A549 (cell line): ENCODE measurements at regions of chr9 and their contacts with region 1.

Region 1: DNA sequence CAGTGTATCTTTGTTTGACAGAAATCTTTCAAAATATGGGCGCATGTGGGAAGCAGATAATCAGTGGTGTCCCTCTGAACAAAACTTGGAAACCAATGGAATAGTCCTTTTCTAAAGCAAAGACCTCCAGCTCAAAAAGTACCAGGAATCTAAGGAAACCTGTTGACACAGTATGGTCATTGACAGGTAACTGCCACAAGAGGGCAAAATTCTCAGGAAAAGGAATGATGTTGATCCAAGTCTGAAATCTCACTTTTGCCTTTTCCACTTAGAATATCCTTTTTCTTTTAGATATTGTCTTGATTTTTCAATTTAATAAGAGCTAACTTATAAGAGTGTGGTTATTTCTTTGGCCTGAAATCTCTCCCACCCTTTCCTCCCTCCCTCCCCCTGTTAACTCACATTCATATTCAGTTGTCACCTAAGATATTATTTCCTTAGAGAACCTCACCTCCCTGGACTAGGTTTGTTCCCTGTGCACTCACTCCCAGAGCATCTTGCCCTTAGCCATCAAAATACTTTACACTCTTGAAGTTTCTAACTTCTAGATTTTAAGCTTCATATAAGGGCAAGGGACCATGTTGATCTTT is 59.0 kb upstream of the BARX1 start:
- DNase-seq: peak; percentile 31 to 39
- ATAC-seq: peak; percentile 64 to 82; a peak in 3 of 6 replicates
- H3K4me3 ChIP-seq: no peak overlapping the region
- H3K27ac ChIP-seq: no peak overlapping the region
- H3K4me1 ChIP-seq: no peaks in the 10 kb centered on the region
- CTCF ChIP-seq: peak; percentile 66
- EP300 ChIP-seq: no peak
- POLR2A ChIP-seq: no peak
- RAD21 ChIP-seq: peak; percentile 57 to 60

Region 2: DNA sequence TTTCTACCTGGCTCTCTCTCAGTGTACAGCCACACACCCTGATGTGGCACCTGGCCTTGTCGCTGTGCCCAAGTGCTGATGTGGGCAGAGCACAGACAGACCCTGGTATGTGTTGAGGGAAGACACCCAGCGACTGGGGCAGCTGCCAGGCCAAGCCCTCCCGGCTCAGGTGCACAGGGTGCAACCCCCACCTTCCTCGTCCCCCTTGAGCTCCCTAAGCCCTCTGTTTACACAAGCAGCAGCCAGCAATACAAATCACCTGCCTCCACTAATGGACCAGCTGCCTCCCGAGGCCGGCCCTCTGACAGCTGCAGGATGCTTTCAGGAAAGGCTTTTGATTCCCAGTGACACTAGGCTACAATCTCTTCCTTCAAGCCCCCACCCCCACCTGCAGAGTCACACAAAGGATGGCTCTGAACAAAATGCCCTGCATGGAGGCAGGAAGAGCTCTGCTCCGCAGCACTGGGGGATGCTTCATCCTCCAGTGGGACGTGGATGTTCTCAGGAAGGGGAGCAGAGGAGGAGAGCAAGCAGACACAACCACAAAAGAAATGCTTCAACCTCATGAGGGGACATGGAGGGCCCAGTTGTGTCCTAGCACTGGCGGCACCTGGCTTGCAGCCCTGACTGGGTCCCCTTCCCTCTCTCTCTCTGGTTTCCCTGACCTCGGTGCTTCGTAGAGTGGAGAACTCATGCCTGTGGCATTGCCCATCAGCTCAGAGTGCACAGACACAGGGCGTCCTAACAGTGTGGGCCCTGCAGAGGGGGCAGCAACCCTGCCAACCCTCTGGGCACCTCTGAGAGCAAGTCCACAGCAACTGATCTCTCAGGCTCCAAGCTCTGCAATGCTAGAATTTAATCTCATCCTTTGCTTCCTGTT is 199.8 kb before region 1 on chr9:
- CTCF ChIA-PET with region 1: no interaction called
- POLR2A ChIA-PET with region 1: no interaction called
- DNase-seq: no peak
- ATAC-seq: peak; percentile 58 to 78; a peak in 4 of 6 replicates
- H3K4me3 ChIP-seq: no peak overlapping the region
- H3K27ac ChIP-seq: no peak overlapping the region
- H3K4me1 ChIP-seq: no peaks in the 10 kb centered on the region
- CTCF ChIP-seq: no peak
- EP300 ChIP-seq: no peak
- POLR2A ChIP-seq: no peak
- RAD21 ChIP-seq: no peak

Region 3: DNA sequence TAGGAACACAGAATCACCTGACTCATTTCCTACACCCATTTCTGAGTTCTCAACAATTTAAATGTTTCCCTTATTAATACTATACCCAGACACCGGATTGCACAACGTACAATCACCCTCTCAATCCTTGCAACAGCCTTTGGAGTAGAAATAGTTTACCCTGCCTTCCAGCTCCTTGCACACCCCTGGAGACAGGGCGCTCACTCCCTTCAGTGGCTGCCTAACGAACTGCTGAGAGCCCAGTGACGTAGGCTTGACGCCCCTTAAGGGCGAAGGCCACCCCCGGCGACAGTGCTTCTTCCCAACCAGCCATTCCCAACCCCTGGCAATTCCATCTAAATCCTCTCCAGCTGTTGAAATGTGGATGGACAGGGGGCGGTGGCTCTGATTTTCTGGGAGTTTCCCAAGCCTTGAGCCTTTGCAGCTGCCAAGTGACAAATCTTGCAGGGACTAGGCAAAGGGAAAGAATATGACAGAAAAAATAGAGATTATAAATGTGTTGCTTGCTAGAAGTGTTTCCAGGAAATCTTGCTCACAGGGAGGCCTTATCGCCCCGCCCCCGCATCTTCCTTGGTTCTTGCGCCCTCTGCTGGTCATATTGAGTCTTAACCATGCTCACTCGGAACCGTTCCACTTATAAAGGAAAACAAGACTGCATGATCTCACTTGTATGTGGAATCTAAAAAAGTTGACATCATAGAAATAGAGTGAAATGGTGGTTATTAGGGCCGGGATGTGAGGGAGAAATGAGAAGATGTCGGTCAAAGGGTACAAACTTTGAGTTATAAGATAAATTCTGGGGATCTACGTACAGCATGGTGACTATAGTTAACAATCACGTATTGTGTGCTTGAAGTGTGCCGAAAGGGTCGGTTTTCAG is 51.4 kb before region 1 on chr9:
- CTCF ChIA-PET with region 1: interaction called, 17 read pairs
- POLR2A ChIA-PET with region 1: no interaction called
- DNase-seq: peak; percentile 78 to 82
- ATAC-seq: peak; percentile 65 to 89; a peak in 5 of 6 replicates
- H3K4me3 ChIP-seq: no peak overlapping the region
- H3K27ac ChIP-seq: 0 out of 6 replicates have a peak overlapping the region, but pooled peaks of 1 of the 2 experiments have one; percentile 37
- H3K4me1 ChIP-seq: peaks cover 3% of the 10 kb centered on the region; the same call in 1 of the 3 replicates
- CTCF ChIP-seq: peak; percentile 86
- EP300 ChIP-seq: no peak
- POLR2A ChIP-seq: no peak
- RAD21 ChIP-seq: peak; percentile 82 to 87

Region 4: DNA sequence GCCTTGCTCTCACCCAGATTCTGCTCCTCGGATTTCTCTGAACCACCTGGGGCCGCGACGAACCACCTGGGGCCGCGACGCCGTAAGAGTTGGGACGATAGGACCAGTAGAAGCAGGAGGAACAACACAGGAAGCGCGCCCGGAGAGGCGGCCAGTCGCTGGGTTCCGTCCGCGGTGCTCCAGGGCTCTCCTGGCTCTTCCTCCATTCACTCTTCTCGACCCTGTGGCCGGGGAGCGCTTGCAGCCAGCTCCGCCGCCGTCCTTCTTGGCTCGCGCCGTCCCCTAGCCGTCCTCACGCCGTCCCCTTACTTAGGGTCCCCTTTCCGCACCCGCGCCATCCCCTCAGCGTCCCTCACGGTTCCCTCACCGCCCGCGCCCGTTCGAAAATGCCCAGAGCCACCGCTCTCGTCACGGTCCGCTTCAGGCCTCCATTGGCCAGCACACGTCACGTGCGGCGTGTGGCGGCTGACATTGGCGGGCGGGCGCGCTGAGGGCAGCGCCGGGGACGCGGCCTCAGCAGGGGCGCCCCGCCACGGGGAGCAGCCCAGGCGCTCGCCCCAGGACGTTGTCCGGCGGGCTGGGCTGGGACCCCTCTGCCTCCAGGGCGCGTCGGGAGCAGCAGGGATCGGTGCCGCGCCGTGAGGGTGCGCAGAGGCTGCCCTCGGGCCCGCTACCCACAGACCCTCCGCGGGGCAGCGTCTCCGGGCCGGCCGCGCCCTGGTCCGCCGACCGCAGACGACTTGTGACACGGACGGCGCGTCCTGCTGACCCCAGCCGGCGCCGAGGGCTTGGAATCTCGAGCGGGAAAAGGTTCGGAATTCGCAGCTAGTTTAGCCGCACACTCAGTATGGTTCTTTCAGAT is 16.4 kb after region 1 on chr9:
- CTCF ChIA-PET with region 1: interaction called, 14 read pairs
- POLR2A ChIA-PET with region 1: no interaction called
- DNase-seq: peak; percentile 85 to 89
- ATAC-seq: peak; percentile 99 to 100
- H3K4me3 ChIP-seq: peak overlapping the region; percentile 88
- H3K27ac ChIP-seq: peak overlapping the region; percentile 84 to 90
- H3K4me1 ChIP-seq: peaks cover 6% of the 10 kb centered on the region; the same call in 1 of the 3 replicates
- CTCF ChIP-seq: no peak
- EP300 ChIP-seq: no peak
- POLR2A ChIP-seq: peak; percentile 81
- RAD21 ChIP-seq: no peak

Region 5: DNA sequence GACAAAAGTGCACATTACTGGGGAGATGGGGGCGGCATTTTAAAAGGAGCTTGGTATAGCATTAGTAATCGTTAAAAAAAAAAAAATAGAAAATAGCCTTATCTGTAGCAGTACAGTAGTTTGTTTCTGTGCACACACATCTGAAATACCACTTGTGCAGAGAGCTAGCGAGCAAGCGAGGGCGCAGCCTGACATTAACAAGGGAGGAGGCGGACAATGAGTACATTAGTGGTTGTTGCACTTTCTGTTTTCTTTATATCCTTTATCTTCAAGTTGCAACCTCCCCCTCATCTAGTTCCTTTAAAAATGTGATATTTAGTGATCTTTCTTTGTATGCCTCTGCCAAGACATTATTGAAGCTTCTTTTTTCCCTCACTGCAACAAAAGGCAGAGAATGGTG is 69.2 kb after region 1 on chr9:
- CTCF ChIA-PET with region 1: interaction called, 11 read pairs
- POLR2A ChIA-PET with region 1: no interaction called
- DNase-seq: no peak
- ATAC-seq: no peak
- H3K4me3 ChIP-seq: no peak overlapping the region
- H3K27ac ChIP-seq: no peak overlapping the region; a peak in 1 of 6 replicates
- H3K4me1 ChIP-seq: peaks cover 18% of the 10 kb centered on the region; the same call in 2 of the 3 replicates
- CTCF ChIP-seq: no peak
- EP300 ChIP-seq: no peak
- POLR2A ChIP-seq: no peak
- RAD21 ChIP-seq: no peak

Region 6: DNA sequence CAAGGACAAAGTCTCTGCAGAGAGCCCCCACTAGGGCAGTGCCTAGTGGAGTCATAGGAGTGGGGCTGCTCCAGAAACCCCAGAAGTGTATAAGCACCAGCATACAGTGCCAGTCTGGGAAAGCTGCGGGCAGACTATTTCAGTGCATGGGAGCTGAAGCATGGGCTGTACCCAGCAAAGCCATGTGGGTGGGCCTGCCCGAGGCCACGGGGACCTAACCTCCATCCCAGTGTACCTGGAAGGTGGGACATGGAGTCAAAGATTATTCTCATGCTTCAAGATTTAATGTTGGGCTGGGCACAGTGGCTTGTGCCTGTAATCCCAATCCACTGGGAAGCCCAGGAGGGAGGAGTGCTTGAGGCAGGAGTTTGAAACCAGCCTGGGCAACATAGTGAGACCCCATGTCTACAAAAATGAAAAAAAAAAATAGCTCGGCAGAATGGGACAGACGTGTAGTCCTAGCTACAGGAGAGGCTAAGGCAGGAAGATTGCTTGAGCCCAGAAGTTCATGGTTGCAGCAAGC is 106.8 kb after region 1 on chr9:
- CTCF ChIA-PET with region 1: no interaction called
- POLR2A ChIA-PET with region 1: no interaction called
- DNase-seq: no peak
- ATAC-seq: no peak
- H3K4me3 ChIP-seq: no peak overlapping the region
- H3K27ac ChIP-seq: no peak overlapping the region
- H3K4me1 ChIP-seq: no peaks in the 10 kb centered on the region
- CTCF ChIP-seq: no peak
- EP300 ChIP-seq: no peak
- POLR2A ChIP-seq: no peak
- RAD21 ChIP-seq: no peak